Mucosa of descending colon (tissue), 3 donors: ENCODE measurements at regions of chr7 and their contacts with region 1.

Region 1: DNA sequence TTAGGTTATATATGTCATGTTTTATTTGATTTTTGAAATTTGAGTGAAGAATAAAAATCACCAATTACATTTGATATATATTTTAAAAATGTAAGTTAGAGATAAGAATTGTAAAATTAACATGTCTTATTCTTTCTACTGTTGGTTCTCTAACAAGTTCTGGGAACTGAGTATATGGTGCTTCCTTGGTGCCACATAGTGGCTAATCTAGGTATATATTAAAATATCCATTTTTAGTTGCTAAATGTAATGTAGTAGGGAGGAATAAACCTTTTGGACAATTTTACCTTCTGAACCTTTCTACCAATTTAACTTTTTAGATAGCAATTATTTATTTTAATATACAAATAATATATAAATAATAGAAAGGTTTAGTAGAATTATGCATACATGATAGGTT is 17.5 kb downstream of the CFAP69 start:
- DNase-seq: no peak
- ATAC-seq: peak; percentile 73
- H3K4me3 ChIP-seq: no peak overlapping the region
- H3K4me1 ChIP-seq: no peaks in the 10 kb centered on the region
- CTCF ChIP-seq: no peak

Region 2: GRCh38 chr7:90155206-90155605 is 107.2 kb before region 1 on chr7:
- intact Hi-C with region 1: loop called (anchors 10 kb)
- DNase-seq: no peak
- ATAC-seq: no peak
- H3K4me3 ChIP-seq: no peak overlapping the region
- H3K4me1 ChIP-seq: no peaks in the 10 kb centered on the region
- CTCF ChIP-seq: no peak

Region 3: GRCh38 chr7:90165724-90166123 is 96.7 kb before region 1 on chr7:
- intact Hi-C with region 1: loop called in 1 of 2 experiments (anchors 10 kb)
- DNase-seq: peak in 2 of 3 donors; percentile 46 to 81
- ATAC-seq: peak; percentile 84
- H3K4me3 ChIP-seq: no peak overlapping the region
- H3K4me1 ChIP-seq: peaks cover 7% of the 10 kb centered on the region
- CTCF ChIP-seq: no peak